Adrenal gland (tissue), 19 donors: ENCODE measurements at regions of chr9 and their contacts with region 1.

Region 1: DNA sequence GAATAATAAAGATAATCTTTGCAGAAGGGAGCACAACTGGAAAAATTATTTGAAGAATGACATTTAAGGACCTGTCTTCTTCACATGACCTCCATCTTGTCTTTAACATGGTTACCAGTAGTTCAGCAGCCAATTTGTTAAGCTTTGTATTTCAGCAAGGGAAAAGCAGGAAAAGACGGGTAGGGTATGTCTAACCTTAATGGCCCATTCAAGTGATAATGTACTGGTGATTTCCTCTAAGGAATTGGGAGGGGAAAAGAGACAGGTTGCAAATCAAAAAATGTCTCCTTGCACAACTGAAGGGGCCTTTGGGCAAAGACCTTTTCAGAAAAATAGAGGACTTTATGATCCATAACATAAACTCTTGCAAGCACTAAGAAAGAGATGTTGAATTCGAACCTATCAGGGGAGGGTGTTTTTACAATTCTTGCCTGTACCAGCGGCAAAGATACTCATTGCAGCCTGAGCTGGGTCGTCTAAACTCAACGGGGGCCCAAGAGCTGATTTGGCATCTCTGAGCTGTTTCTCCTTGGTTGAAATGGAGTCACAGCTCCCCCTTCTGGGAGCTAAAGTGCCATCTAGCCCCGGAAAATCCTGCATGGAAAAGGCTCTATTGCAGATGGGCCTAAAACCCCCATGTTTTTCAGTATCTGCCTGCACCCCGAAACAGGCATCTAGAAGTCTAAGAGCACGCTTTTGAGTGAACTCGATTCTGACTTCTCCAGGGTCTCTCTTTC is 3.8 kb downstream of the BRINP1 start:
- DNase-seq: peak; percentile 16 to 74 (median 37)
- H3K4me3 ChIP-seq: no peak overlapping the region
- H3K27ac ChIP-seq: no peak overlapping the region
- H3K4me1 ChIP-seq: peaks cover 0 to 7% of the 10 kb centered on the region in 2 donors
- H3K27me3 ChIP-seq: peaks cover 28% of the 10 kb centered on the region
- CTCF ChIP-seq: peak; percentile 28 to 68 (median 54)
- POLR2A ChIP-seq: no peak

Region 2: DNA sequence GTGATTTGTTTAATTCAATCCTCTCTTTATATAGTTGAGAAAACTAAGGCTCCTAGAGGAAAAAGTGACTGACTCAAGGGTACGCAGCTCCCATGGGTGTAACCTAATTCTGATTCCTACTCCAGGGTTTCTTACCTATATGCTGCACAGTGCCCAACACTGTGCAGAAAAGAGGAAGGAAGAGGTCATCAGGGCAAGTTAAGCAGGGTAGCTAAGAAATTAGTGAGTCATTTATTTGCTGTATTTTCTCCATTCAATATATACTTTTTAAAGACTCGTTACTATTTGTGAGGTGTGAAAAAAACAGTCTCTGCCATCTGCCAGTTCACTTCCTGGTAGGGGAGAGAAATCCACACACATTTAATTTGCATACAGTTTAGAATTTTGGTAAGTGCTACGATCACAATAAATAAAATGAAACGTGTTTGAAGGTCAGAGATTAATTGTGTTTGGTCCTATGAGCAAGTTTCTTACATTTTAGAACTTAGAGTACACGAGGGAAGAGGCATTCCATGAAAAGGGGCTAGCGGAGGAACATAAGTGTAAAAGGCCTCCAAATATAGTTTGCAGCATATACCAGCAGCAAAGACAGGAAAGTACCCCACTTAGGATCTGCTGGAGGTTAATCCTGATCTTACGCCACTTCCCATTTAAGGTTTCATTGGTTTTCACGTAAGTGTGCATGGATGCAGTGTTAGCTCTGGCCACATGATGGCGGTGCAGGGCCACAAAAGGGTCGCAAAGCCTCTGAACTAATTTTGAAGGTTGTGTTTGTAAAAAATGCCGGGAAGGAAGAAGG is 1721.1 kb before region 1 on chr9:
- intact Hi-C with region 1: loop called in 1 of 2 experiments (anchors 10 kb)
- DNase-seq: peak; percentile 55 to 93 (median 75)
- H3K4me3 ChIP-seq: peak overlapping the region in 1 of 4 donors; percentile 17
- H3K27ac ChIP-seq: peak overlapping the region in 1 of 5 donors; percentile 50
- H3K4me1 ChIP-seq: peaks cover 0 to 7% of the 10 kb centered on the region in 2 donors
- H3K27me3 ChIP-seq: peaks cover 6% of the 10 kb centered on the region
- CTCF ChIP-seq: peak; percentile 91 to 97 (median 96)
- POLR2A ChIP-seq: no peak

Region 3: GRCh38 chr9:117782931-117783788 is 1582.3 kb before region 1 on chr9:
- intact Hi-C with region 1: loop called in 1 of 2 experiments (anchors 10 kb)
- DNase-seq: peak; percentile 72 to 93 (median 79)
- H3K4me3 ChIP-seq: peak overlapping the region in 1 of 4 donors; percentile 50
- H3K27ac ChIP-seq: peak overlapping the region in 4 of 5 donors; percentile 16 to 72 (median 60)
- H3K4me1 ChIP-seq: peaks cover 3 to 27% of the 10 kb centered on the region in 2 donors
- H3K27me3 ChIP-seq: no peaks in the 10 kb centered on the region
- CTCF ChIP-seq: peak; percentile 68 to 98 (median 88)
- POLR2A ChIP-seq: no peak

Region 4: DNA sequence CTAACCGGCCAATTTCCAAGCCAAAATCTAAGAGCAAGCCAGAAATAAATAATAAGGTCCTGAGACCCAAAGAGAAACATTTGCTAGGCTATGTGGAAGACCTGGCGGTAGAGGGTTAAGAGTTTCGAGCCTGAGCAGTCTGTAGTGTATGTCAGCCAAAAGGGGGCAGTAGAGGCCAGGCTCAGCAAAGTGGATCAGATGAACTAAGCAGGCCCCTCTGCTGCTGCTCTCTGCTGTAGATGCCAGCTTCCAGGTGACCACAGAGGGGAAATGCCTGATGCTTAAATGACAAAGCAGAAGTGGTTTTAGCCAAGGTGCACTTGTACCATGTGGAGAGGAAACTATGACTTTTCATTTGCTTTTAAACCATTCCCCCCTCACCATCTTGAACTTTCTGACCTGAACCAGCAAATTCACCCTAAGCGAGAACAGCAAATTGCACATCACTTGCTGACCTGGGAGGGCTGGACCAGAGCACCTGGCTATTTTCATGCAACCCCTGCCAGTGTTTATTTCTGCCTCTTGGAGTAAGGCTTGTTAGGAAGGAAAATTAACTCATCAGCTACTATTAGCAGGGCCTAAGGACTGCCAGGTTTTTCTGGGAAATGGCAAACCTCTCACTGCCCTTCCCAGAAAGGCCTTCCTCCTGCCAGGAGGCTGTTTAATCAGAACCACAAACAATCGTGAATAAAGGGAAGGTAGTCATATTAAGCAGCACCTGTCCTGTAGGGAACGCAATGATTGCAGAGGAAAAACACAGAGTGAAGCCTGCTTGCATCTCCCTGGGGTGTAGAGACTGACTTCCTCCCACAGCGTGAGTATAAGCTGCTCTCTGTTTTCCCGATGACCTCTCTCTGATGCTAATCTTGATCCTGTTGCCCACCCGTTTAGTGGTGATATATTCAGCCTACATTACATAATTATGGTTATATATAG is 843.1 kb before region 1 on chr9:
- intact Hi-C with region 1: loop called in 1 of 2 experiments (anchors 10 kb)
- DNase-seq: peak; percentile 21 to 69 (median 34)
- H3K4me3 ChIP-seq: no peak overlapping the region
- H3K27ac ChIP-seq: no peak overlapping the region
- H3K4me1 ChIP-seq: no peaks in the 10 kb centered on the region
- H3K27me3 ChIP-seq: no peaks in the 10 kb centered on the region
- CTCF ChIP-seq: peak; percentile 29 to 57 (median 44)
- POLR2A ChIP-seq: no peak

Region 5: DNA sequence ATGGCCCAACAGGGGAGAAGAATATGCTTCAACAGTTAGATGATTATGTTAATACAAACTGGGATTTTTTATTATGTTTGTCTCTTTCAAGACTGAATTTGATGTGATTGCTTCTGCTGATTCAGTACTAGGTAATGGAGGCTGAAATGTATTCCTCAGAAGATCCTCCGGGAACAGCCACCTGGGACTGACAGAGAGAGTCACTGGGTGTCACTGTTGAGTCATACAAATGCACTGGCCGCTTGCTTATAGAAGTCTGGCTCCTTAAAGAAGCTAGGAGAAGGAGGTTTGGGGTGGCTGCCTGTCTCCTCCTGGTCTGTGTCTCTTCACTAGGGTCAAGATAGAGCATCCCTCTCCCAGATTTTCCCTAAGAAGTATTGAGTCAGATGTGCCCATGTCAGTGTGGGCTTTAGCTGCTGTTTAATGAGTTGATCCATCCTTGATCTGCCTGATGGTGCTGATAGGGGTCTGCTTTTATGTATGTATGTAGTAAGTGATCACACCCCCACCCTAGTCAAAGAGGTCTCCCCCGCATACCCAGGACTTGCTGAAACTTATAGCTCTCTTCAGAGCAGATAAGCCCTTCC is 769.6 kb before region 1 on chr9:
- intact Hi-C with region 1: loop called in 1 of 2 experiments (anchors 10 kb)
- DNase-seq: peak; percentile 13 to 71 (median 23)
- H3K4me3 ChIP-seq: no peak overlapping the region
- H3K27ac ChIP-seq: no peak overlapping the region
- H3K4me1 ChIP-seq: no peaks in the 10 kb centered on the region
- H3K27me3 ChIP-seq: no peaks in the 10 kb centered on the region
- CTCF ChIP-seq: peak in 4 of 6 experiments; percentile 7 to 38 (median 26)
- POLR2A ChIP-seq: no peak

Region 6: GRCh38 chr9:119289740-119290433 is 75.6 kb before region 1 on chr9:
- intact Hi-C with region 1: loop called in 1 of 2 experiments (anchors 10 kb)
- DNase-seq: peak; percentile 55 to 84 (median 68)
- H3K4me3 ChIP-seq: no peak overlapping the region
- H3K27ac ChIP-seq: no peak overlapping the region
- H3K4me1 ChIP-seq: no peaks in the 10 kb centered on the region
- H3K27me3 ChIP-seq: no peaks in the 10 kb centered on the region
- CTCF ChIP-seq: peak; percentile 76 to 87 (median 80)
- POLR2A ChIP-seq: no peak